Activated CD4-positive, alpha-beta memory T cell treated with anti-CD3 and anti-CD28 coated beads for 36 hours (primary cell): ENCODE measurements at regions of chr2 and their contacts with region 1.

Region 1: GRCh38 chr2:61538200-61538919 is at the start of gene XPO1:
- DNase-seq: peak; percentile 100
- H3K4me3 Mint-ChIP-seq: peak within 1 kb of the TSS; percentile 97
- H3K27ac Mint-ChIP-seq: peak within 1 kb of the TSS; percentile 99
- H3K4me1 Mint-ChIP-seq: peaks cover 30% of the 10 kb centered on the region
- H3K27me3 Mint-ChIP-seq: peaks cover 3% of the 10 kb centered on the region
- total RNA-seq, gene XPO1: 191 to 198 TPM

Region 2: DNA sequence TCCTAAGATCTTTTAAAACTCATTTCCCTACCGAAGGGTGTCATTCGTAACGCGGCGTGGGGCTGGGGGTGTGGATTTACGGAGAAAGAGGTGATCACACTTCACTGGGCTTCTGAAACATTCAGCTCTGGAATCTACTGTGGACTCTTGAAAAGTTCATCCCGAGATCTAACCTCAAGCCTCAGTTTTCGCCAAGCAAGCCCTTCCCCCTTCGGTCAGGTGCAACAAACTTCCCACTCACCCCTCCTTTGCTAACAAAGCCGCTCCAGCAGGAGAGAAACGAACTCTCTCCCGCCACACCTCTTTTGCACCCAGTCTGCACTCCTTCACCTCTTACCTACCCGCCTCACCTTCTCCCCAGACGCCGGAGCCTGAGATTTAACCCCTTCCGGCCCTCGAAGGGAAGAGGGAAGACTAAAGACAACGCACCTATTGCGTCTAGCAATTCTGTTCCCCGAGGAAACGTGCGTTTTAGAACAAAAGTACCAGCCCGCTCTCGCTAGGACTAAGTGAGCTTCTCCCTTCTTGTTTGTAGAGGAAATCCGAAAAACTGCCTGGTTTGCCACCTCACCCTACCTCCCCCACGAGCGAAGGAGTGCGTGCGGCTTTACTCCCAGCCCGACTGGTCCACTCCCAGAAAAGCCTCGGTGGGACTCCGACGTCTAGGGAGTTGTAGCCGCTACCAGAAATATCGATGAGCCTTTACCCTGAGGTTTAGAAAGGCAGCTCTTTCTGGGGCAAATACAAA is 521.4 kb before region 1 on chr2:
- CTCF ChIA-PET with region 1: no interaction called
- POLR2A ChIA-PET with region 1: no interaction called
- intact Hi-C with region 1: loop called (anchors 1 kb)
- DNase-seq: peak; percentile 83
- H3K4me3 Mint-ChIP-seq: peak overlapping the region; percentile 94
- H3K27ac Mint-ChIP-seq: peak overlapping the region; percentile 96
- H3K4me1 Mint-ChIP-seq: peaks cover 35% of the 10 kb centered on the region
- H3K27me3 Mint-ChIP-seq: no peaks in the 10 kb centered on the region

Region 3: DNA sequence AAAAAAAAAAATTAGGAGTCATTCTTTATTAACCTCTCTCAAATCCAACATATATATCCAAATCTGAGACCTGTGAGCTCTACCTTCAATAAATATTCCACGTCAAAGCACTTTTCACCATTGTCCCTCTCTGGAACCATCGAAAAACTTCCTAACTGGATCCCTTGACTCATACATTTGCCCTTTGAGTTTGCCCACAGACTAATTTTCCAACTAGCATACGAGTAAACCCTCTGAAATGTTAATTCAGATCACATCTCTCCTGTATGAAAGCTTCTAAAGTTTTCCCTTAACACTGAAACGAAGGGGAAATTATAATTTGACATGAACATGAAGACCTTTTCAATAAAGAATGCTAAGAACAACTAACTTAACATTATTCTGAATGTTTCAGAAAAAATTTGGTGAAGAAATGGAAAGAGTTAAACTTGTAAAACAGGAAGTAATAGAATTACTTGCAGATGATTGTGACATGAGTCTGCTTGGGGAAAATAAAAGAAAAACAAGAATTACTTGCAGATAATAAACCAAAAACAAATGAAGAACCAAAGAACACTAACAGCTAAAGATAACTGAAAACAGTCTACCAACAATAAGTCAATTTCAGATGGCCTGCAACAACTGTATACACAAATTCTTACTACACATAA is 265.8 kb before region 1 on chr2:
- CTCF ChIA-PET with region 1: no interaction called
- POLR2A ChIA-PET with region 1: no interaction called
- intact Hi-C with region 1: no loop called
- DNase-seq: no peak
- H3K4me3 Mint-ChIP-seq: no peak overlapping the region
- H3K27ac Mint-ChIP-seq: peak overlapping the region; percentile 29
- H3K4me1 Mint-ChIP-seq: no peaks in the 10 kb centered on the region
- H3K27me3 Mint-ChIP-seq: no peaks in the 10 kb centered on the region

Region 4: DNA sequence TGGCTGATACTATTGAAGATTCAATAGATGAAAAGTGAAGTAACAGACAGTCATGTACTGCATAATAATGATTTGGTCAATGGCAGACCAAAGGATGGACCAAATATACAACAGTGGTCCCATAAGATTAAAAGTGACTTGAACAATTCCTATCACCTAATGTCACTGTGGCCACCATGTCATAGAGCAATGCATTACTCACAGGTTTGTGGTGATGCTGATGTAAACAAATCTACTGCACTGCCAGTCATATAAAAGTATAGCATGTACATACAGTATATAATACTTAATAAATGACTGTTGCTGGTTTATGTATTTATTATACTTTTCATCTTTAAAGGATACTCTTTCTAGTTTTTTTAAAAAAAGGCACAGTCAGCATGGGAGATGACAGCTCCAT is 167.3 kb before region 1 on chr2:
- CTCF ChIA-PET with region 1: no interaction called
- POLR2A ChIA-PET with region 1: no interaction called
- intact Hi-C with region 1: no loop called
- DNase-seq: no peak
- H3K4me3 Mint-ChIP-seq: no peak overlapping the region
- H3K27ac Mint-ChIP-seq: no peak overlapping the region
- H3K4me1 Mint-ChIP-seq: peaks cover 30% of the 10 kb centered on the region
- H3K27me3 Mint-ChIP-seq: no peaks in the 10 kb centered on the region

Region 5: DNA sequence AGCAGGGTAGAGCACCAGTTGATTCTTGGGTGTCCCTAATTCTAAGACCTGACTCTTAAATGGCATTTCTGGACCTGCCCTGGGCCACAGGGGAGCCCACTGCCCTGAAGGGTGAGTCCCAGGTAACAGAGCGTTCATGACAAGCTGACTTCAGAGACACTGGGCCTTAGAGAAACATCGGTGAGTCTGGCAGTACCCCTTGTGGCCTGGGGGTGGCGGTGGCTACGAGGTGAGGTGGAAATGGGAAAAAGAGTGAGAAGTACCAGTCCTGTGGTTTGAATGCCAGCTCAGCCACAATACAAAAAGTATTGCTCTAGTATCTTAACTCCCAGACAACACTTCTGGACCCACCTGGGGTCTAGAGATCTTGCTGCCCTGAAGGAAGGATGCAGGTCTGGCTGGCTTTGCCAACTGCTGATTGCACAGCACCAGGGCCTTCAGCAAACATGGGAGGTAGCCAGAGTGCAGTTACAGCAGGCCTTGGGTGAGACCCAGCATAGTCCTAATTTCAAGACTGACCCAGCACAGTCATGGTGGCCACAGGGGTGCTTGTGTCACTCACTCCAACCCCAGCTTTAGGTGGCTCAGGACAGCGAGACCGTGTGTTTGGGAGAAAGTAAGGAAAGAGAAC is 112.0 kb before region 1 on chr2:
- CTCF ChIA-PET with region 1: interaction called, 14 read pairs
- POLR2A ChIA-PET with region 1: no interaction called
- intact Hi-C with region 1: loop called (anchors 1 kb)
- DNase-seq: peak; percentile 84
- H3K4me3 Mint-ChIP-seq: no peak overlapping the region
- H3K27ac Mint-ChIP-seq: peak overlapping the region; percentile 64
- H3K4me1 Mint-ChIP-seq: peaks cover 57% of the 10 kb centered on the region
- H3K27me3 Mint-ChIP-seq: no peaks in the 10 kb centered on the region

Region 6: GRCh38 chr2:61620244-61621159 is 82.1 kb after region 1 on chr2:
- CTCF ChIA-PET with region 1: no interaction called
- POLR2A ChIA-PET with region 1: interaction called, 4 read pairs
- intact Hi-C with region 1: loop called (anchors 2 kb)
- DNase-seq: peak; percentile 28
- H3K4me3 Mint-ChIP-seq: no peak overlapping the region
- H3K27ac Mint-ChIP-seq: no peak overlapping the region
- H3K4me1 Mint-ChIP-seq: peaks cover 6% of the 10 kb centered on the region
- H3K27me3 Mint-ChIP-seq: no peaks in the 10 kb centered on the region

Region 7: GRCh38 chr2:61726456-61727209 is 188.3 kb after region 1 on chr2:
- CTCF ChIA-PET with region 1: no interaction called
- POLR2A ChIA-PET with region 1: no interaction called
- intact Hi-C with region 1: no loop called
- DNase-seq: no peak
- H3K4me3 Mint-ChIP-seq: no peak overlapping the region
- H3K27ac Mint-ChIP-seq: no peak overlapping the region
- H3K4me1 Mint-ChIP-seq: no peaks in the 10 kb centered on the region
- H3K27me3 Mint-ChIP-seq: peaks cover 4% of the 10 kb centered on the region

Region 8: GRCh38 chr2:61764035-61764800 is 225.9 kb after region 1 on chr2:
- CTCF ChIA-PET with region 1: no interaction called
- POLR2A ChIA-PET with region 1: interaction called, 9 read pairs
- intact Hi-C with region 1: loop called (anchors 1 kb)
- DNase-seq: peak; percentile 99
- H3K4me3 Mint-ChIP-seq: peak overlapping the region; percentile 90
- H3K27ac Mint-ChIP-seq: peak overlapping the region; percentile 95
- H3K4me1 Mint-ChIP-seq: peaks cover 17% of the 10 kb centered on the region
- H3K27me3 Mint-ChIP-seq: peaks cover under 1% of the 10 kb centered on the region

Region 9: DNA sequence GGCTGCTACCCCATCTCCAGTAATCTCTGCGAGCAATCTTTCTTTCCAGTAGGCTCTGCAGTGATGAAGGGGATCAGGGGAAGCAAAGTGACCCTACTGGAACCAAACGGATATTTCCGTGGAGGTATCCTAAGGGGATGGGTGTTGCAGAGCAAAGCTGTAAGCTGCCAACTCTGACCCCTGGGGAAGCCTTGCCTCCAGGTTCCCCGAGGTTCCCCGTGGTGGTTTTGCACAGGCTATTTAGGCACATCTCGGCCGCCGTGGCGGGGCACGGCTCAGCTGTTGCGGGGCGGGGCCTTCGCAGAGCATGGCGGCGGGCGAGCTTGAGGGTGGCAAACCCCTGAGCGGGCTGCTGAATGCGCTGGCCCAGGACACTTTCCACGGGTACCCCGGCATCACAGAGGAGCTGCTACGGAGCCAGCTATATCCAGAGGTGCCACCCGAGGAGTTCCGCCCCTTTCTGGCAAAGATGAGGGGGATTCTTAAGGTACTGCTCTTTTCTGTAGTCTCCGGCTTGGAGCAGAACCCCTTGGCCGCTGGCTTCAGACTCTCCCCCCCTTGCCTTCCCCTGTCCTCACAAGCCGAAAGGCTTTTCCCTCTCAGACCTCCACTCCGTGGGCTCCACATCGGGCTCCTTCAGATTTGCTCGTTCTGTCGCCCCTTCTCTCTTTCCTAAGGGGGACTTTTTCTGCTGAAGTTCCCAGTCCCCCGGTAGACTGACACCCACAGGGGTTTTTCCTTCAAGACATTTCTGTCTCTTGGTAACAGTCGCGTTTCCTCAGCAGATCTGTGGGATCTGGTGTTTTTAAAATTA is 367.2 kb after region 1 on chr2 and contains the start of gene COMMD1:
- CTCF ChIA-PET with region 1: interaction called, 5 read pairs
- POLR2A ChIA-PET with region 1: no interaction called
- intact Hi-C with region 1: loop called (anchors 1 kb)
- DNase-seq: peak; percentile 91
- H3K4me3 Mint-ChIP-seq: peak within 1 kb of the TSS; percentile 93
- H3K27ac Mint-ChIP-seq: peak within 1 kb of the TSS; percentile 56
- H3K4me1 Mint-ChIP-seq: peaks cover 19% of the 10 kb centered on the region
- H3K27me3 Mint-ChIP-seq: no peaks in the 10 kb centered on the region
- total RNA-seq, gene COMMD1: 33.0 to 33.8 TPM

Region 10: DNA sequence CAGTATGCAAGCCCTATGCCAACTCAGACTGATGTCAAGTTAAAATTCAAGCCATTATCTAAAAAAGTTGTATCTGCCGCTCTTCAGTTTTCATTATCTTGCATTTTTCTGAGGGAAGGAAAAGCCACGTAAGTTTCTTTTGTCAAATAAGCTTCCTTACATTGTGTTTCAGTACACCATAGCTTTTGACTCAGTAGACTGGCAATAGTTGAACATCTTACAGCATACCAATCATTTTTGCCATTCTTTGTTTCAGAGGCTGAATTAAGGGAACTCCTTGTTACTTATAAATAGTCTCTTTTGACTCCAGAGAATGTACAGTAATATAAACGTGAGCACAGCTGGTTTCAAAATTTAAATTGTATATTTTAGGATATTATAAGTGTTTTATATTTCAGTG is 1287.8 kb after region 1 on chr2:
- CTCF ChIA-PET with region 1: no interaction called
- POLR2A ChIA-PET with region 1: no interaction called
- intact Hi-C with region 1: no loop called
- DNase-seq: no peak
- H3K4me3 Mint-ChIP-seq: no peak overlapping the region
- H3K27ac Mint-ChIP-seq: no peak overlapping the region
- H3K4me1 Mint-ChIP-seq: peaks cover 2% of the 10 kb centered on the region
- H3K27me3 Mint-ChIP-seq: no peaks in the 10 kb centered on the region